Sigmoid colon (tissue), 7 donors: ENCODE measurements at regions of chr4 and their contacts with region 1.

Region 1: GRCh38 chr4:112951362-112952312 is 97.8 kb upstream of the ANK2 start:
- DNase-seq: no peak
- H3K4me3 ChIP-seq: peak overlapping the region in 1 of 4 donors; percentile 24
- H3K27ac ChIP-seq: no peak overlapping the region
- H3K4me1 ChIP-seq: peaks cover 0 to 9% (median 0%) of the 10 kb centered on the region in 4 donors
- H3K27me3 ChIP-seq: no peaks in the 10 kb centered on the region
- CTCF ChIP-seq: peak; percentile 31 to 57 (median 36)
- EP300 ChIP-seq: no peak
- POLR2A ChIP-seq: no peak

Region 2: GRCh38 chr4:112853662-112854256 is 97.9 kb before region 1 on chr4:
- intact Hi-C with region 1: no loop called
- DNase-seq: no peak
- H3K4me3 ChIP-seq: no peak overlapping the region
- H3K27ac ChIP-seq: peak overlapping the region; percentile 42 to 70 (median 56)
- H3K4me1 ChIP-seq: peaks cover 0 to 48% (median 24%) of the 10 kb centered on the region in 4 donors
- H3K27me3 ChIP-seq: no peaks in the 10 kb centered on the region
- CTCF ChIP-seq: peak in 3 of 4 experiments; percentile 15 to 39 (median 19)
- EP300 ChIP-seq: no peak
- POLR2A ChIP-seq: no peak

Region 3: GRCh38 chr4:113080050-113080449 is 128.4 kb after region 1 on chr4:
- intact Hi-C with region 1: loop called (anchors 10 kb)
- DNase-seq: no peak
- H3K4me3 ChIP-seq: no peak overlapping the region
- H3K27ac ChIP-seq: no peak overlapping the region
- H3K4me1 ChIP-seq: no peaks in the 10 kb centered on the region
- H3K27me3 ChIP-seq: no peaks in the 10 kb centered on the region
- CTCF ChIP-seq: no peak
- EP300 ChIP-seq: no peak
- POLR2A ChIP-seq: no peak

Region 4: GRCh38 chr4:113272523-113272922 is 320.9 kb after region 1 on chr4:
- intact Hi-C with region 1: no loop called
- DNase-seq: no peak
- H3K4me3 ChIP-seq: no peak overlapping the region
- H3K27ac ChIP-seq: no peak overlapping the region
- H3K4me1 ChIP-seq: no peaks in the 10 kb centered on the region
- H3K27me3 ChIP-seq: no peaks in the 10 kb centered on the region
- CTCF ChIP-seq: no peak
- EP300 ChIP-seq: no peak
- POLR2A ChIP-seq: no peak

Region 5: GRCh38 chr4:113445286-113445685 is 493.6 kb after region 1 on chr4:
- intact Hi-C with region 1: no loop called
- DNase-seq: peak; percentile 85
- H3K4me3 ChIP-seq: no peak overlapping the region
- H3K27ac ChIP-seq: peak overlapping the region; percentile 69 to 80 (median 72)
- H3K4me1 ChIP-seq: peaks cover 0 to 63% (median 46%) of the 10 kb centered on the region in 4 donors
- H3K27me3 ChIP-seq: no peaks in the 10 kb centered on the region
- CTCF ChIP-seq: no peak
- EP300 ChIP-seq: peak in 1 of 4 donors; percentile 57
- POLR2A ChIP-seq: no peak